ENCODE measurements at regions of chr1 and their contacts with region 1.

Region 1: DNA sequence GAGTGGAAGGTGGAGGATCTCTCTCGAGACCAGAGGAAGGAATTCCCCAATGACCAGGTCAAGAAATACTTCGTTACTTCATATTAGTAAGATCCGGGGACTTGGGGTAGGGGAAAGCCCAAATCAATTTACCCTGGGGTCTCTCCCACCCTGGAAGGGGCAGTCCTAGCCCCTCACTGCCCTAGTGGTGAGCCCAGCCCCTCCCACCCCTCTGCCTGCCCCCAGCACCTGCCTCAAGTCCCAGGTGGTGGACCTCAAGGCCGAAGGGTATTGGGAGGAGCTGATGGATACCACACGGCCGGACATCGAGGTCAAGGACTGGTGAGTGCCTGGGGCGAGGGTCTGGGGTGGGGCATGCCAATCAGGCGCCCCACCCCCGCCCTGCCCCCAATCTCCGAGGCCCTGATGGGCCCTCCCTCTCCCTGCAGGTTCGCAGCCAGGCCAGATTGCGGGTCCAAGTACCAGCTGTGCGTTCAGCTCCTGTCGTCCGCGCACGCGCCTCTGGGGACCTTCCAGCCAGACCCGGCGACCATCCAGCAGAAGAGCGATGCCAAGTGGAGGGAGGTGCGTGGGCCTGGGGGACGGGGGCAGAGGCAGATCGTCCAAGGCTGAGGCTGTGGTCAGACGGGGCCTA is 3.7 kb downstream of the FBXO44 start:
- DNase-seq: no peak
- ATAC-seq: no peak
- H3K4me3 Mint-ChIP-seq: no peak overlapping the region
- H3K27ac Mint-ChIP-seq: no peak overlapping the region
- H3K4me1 Mint-ChIP-seq: peaks cover 0 to 22% (median 11%) of the 10 kb centered on the region in 4 donors
- H3K27me3 Mint-ChIP-seq: no peaks in the 10 kb centered on the region

Region 2: GRCh38 chr1:11681071-11681771 is 22.8 kb after region 1 on chr1 and contains the start of gene MAD2L2:
- POLR2A ChIA-PET with region 1: interaction called, 20 read pairs
- DNase-seq: peak; percentile 82 to 95 (median 88)
- ATAC-seq: peak; percentile 86
- H3K4me3 Mint-ChIP-seq: peak within 1 kb of the TSS; percentile 85 to 99 (median 92)
- H3K27ac Mint-ChIP-seq: peak within 1 kb of the TSS; percentile 61 to 95 (median 92)
- H3K4me1 Mint-ChIP-seq: peaks cover 4 to 25% (median 16%) of the 10 kb centered on the region in 4 donors
- H3K27me3 Mint-ChIP-seq: peaks cover 0 to 4% (median 2%) of the 10 kb centered on the region in 5 donors
- polyA plus RNA-seq, gene MAD2L2: 52.2 to 66.1 (median 54.2) TPM